T-cell (primary cell): ENCODE measurements at regions of chr5 and their contacts with region 1.

Region 1: DNA sequence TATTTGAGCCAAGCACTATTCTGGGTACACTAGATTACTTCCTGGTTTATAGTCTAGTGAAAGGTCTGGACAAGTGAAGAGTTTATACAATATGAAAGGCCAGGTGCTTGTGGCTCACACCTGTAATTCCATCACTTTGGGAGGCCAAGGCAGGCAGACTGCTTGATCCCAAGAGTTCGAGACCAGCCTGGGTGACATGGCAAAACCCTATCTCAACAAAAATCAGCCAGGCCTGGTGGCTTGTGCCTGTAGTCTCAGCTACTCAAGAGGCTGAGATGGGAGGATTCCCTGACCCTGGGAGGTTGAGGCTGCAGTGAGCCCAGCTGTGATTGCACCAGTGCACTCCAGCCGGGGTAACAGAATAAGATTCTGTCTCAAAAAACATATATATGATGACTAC is 9.5 kb upstream of the TXNDC15 start:
- DNase-seq: no peak
- ATAC-seq: no peak
- H3K4me3 ChIP-seq: no peak overlapping the region
- H3K4me3 Mint-ChIP-seq: no peak overlapping the region
- H3K27ac ChIP-seq: no peak overlapping the region
- H3K27ac Mint-ChIP-seq: no peak overlapping the region
- H3K4me1 ChIP-seq: no peaks in the 10 kb centered on the region
- H3K4me1 Mint-ChIP-seq: no peaks in the 10 kb centered on the region
- H3K27me3 ChIP-seq: no peaks in the 10 kb centered on the region
- H3K27me3 Mint-ChIP-seq: no peaks in the 10 kb centered on the region

Region 2: DNA sequence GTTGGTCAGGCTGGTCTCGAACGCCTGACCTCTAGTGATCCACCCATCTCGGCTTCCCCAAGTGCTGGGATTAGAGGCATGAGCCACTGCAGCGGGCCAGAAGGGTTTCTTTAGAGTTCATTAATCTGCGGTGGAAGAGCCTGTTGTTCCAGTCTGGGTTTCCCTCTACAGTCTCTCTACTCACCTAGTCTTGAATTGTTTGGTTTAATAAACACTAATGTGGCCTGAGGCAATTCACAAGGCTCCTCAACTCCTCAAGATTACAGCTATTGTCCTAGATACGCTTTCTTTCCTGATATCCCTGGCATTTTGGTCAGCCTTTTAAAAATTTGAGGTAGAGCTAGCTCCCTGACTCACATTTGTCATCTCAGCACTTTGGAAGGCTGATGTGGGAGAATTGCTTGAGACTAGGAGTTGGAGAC is 227.5 kb before region 1 on chr5:
- CTCF ChIA-PET with region 1: no interaction called
- POLR2A ChIA-PET with region 1: interaction called in 1 of 2 experiments, 10 read pairs
- DNase-seq: no peak
- ATAC-seq: no peak
- H3K4me3 ChIP-seq: no peak overlapping the region
- H3K4me3 Mint-ChIP-seq: no peak overlapping the region
- H3K27ac ChIP-seq: no peak overlapping the region
- H3K27ac Mint-ChIP-seq: no peak overlapping the region
- H3K4me1 ChIP-seq: peaks cover 0 to 8% of the 10 kb centered on the region in 2 experiments
- H3K4me1 Mint-ChIP-seq: peaks cover 0 to 9% (median 7%) of the 10 kb centered on the region in 3 donors
- H3K27me3 ChIP-seq: no peaks in the 10 kb centered on the region
- H3K27me3 Mint-ChIP-seq: no peaks in the 10 kb centered on the region

Region 3: GRCh38 chr5:134724872-134725271 is 139.8 kb before region 1 on chr5:
- CTCF ChIA-PET with region 1: no interaction called
- POLR2A ChIA-PET with region 1: no interaction called
- DNase-seq: no peak
- ATAC-seq: no peak
- H3K4me3 ChIP-seq: no peak overlapping the region
- H3K4me3 Mint-ChIP-seq: no peak overlapping the region
- H3K27ac ChIP-seq: no peak overlapping the region
- H3K27ac Mint-ChIP-seq: no peak overlapping the region
- H3K4me1 ChIP-seq: no peaks in the 10 kb centered on the region
- H3K4me1 Mint-ChIP-seq: no peaks in the 10 kb centered on the region
- H3K27me3 ChIP-seq: no peaks in the 10 kb centered on the region
- H3K27me3 Mint-ChIP-seq: no peaks in the 10 kb centered on the region

Region 4: DNA sequence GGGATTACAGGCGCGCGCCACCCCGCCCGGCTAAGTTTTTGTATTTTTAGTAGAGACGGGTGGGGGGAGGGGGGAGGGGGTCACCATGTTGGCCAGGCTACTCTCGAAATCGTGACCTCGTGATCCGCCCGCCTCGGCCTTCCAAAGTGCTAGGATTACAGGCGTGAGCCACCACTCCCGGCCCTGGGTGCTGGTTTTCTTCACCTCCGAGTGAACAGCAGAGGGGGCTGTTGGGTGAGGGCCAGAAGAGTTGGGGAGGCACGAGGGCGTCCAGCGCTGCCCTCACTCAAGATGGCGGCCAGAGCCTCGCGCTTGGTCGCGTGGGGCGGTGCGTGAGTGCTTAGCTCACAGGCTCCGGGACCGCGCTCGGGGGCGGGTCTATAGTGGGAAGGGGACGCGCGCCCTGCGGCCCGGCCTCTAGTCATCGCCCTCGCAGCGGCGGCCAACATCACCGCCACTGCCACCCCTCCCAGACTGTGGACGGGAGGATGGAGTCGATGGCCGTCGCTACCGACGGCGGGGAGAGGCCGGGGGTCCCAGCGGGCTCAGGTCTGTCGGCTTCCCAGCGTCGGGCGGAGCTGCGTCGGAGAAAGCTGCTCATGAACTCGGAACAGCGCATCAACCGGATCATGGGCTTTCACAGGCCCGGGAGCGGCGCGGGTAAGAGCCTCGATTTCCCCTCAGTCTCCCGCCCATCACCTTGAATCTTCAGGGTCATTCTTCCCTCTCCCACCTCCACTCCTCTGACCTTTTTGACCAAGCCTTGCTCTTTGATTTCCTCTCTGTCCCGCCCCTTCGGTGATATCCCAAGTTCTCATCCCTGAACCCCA is 126.4 kb before region 1 on chr5 and contains the start of gene CAMLG:
- CTCF ChIA-PET with region 1: no interaction called
- POLR2A ChIA-PET with region 1: no interaction called
- DNase-seq: peak; percentile 92 to 99 (median 96)
- ATAC-seq: peak; percentile 96 to 98 (median 98)
- H3K4me3 ChIP-seq: peak within 1 kb of the TSS; percentile 73 to 76
- H3K4me3 Mint-ChIP-seq: peak within 1 kb of the TSS; percentile 90 to 95 (median 91)
- H3K27ac ChIP-seq: peak within 1 kb of the TSS; percentile 86
- H3K27ac Mint-ChIP-seq: peak within 1 kb of the TSS; percentile 83 to 96
- H3K4me1 ChIP-seq: peaks cover 9 to 26% of the 10 kb centered on the region in 2 experiments
- H3K4me1 Mint-ChIP-seq: peaks cover 25 to 36% (median 29%) of the 10 kb centered on the region in 3 donors
- H3K27me3 ChIP-seq: no peaks in the 10 kb centered on the region
- H3K27me3 Mint-ChIP-seq: no peaks in the 10 kb centered on the region
- total RNA-seq, gene CAMLG: 26.7 to 34.6 (median 32.5) TPM

Region 5: DNA sequence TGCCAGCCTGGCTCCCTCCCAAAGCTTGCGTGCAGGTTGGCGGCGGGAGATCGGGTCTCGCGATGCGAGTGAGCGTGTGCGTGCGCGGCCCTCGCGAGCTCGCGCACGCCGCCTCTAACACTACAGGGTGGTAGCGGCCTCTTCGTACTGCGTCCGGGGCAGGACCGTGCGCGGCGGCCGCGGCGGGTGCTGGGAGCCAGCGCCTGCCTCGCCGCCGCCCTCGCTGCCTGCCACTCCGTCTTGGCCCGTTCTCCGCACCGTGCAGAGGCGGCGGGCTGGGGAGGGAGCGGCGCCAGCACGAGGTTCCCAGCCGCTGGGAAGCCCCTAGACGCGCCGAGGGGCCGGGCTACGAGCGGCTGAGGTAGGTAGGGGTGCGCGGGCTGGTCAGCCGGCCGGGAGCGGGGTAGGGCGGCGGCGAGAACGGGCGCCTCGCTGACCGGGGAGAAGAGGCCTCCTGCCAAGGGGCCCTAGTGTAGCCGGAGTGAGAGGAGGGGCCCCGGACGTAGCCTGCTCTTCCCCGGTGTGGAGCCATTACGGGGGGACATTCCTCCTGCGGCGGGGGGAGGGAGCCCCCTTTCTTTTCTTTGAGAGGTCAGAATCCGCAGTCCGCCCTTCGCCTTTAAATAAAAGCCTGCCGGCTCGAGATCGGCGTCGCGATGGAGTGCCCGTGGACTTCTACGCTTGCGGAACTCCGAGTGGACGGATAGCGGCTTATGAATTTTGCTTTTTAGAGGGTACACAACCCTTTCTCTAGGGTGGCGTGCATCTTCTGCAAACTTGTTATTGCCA is 18.7 kb before region 1 on chr5 and contains the start of gene C5orf24:
- CTCF ChIA-PET with region 1: interaction called in 1 of 2 experiments, 3 read pairs
- POLR2A ChIA-PET with region 1: interaction called, 6 to 11 read pairs
- DNase-seq: peak; percentile 82 to 97 (median 90)
- ATAC-seq: peak; percentile 92 to 97 (median 95)
- H3K4me3 ChIP-seq: peak within 1 kb of the TSS; percentile 66 to 96
- H3K4me3 Mint-ChIP-seq: peak within 1 kb of the TSS; percentile 81 to 93 (median 92)
- H3K27ac ChIP-seq: peak within 1 kb of the TSS; percentile 85
- H3K27ac Mint-ChIP-seq: peak within 1 kb of the TSS; percentile 96 to 97
- H3K4me1 ChIP-seq: peaks cover 8 to 31% of the 10 kb centered on the region in 2 experiments
- H3K4me1 Mint-ChIP-seq: peaks cover 31 to 37% (median 32%) of the 10 kb centered on the region in 3 donors
- H3K27me3 ChIP-seq: no peaks in the 10 kb centered on the region
- H3K27me3 Mint-ChIP-seq: no peaks in the 10 kb centered on the region
- total RNA-seq, gene C5orf24: 23.0 to 34.9 (median 29.0) TPM

Region 6: GRCh38 chr5:135053278-135053677 is 188.6 kb after region 1 on chr5:
- CTCF ChIA-PET with region 1: no interaction called
- POLR2A ChIA-PET with region 1: no interaction called
- DNase-seq: no peak
- ATAC-seq: no peak
- H3K4me3 ChIP-seq: no peak overlapping the region
- H3K4me3 Mint-ChIP-seq: no peak overlapping the region
- H3K27ac ChIP-seq: no peak overlapping the region
- H3K27ac Mint-ChIP-seq: no peak overlapping the region
- H3K4me1 ChIP-seq: no peaks in the 10 kb centered on the region
- H3K4me1 Mint-ChIP-seq: peaks cover 0 to 5% (median 0%) of the 10 kb centered on the region in 3 donors
- H3K27me3 ChIP-seq: peaks cover 10 to 61% of the 10 kb centered on the region in 2 experiments
- H3K27me3 Mint-ChIP-seq: peaks cover 59 to 67% of the 10 kb centered on the region in 2 donors